CD8-positive, alpha-beta T cell (primary cell): ENCODE measurements at regions of chr6 and their contacts with region 1.

Region 1: GRCh38 chr6:11537229-11538051 is at the start of gene TMEM170B:
- DNase-seq: peak; percentile 94 to 99 (median 97)
- ATAC-seq: peak; percentile 93
- H3K4me3 ChIP-seq: peak within 1 kb of the TSS; percentile 71 to 85
- H3K4me3 Mint-ChIP-seq: peak within 1 kb of the TSS; percentile 85
- H3K27ac ChIP-seq: peak within 1 kb of the TSS; percentile 36 to 60
- H3K27ac Mint-ChIP-seq: peak within 1 kb of the TSS; percentile 74
- H3K4me1 ChIP-seq: peaks cover 10% of the 10 kb centered on the region
- H3K4me1 Mint-ChIP-seq: peaks cover 18% of the 10 kb centered on the region
- H3K27me3 ChIP-seq: no peaks in the 10 kb centered on the region
- H3K27me3 Mint-ChIP-seq: peaks cover 7% of the 10 kb centered on the region
- CTCF ChIP-seq: no peak
- total RNA-seq, gene TMEM170B: 2.2 TPM

Region 2: DNA sequence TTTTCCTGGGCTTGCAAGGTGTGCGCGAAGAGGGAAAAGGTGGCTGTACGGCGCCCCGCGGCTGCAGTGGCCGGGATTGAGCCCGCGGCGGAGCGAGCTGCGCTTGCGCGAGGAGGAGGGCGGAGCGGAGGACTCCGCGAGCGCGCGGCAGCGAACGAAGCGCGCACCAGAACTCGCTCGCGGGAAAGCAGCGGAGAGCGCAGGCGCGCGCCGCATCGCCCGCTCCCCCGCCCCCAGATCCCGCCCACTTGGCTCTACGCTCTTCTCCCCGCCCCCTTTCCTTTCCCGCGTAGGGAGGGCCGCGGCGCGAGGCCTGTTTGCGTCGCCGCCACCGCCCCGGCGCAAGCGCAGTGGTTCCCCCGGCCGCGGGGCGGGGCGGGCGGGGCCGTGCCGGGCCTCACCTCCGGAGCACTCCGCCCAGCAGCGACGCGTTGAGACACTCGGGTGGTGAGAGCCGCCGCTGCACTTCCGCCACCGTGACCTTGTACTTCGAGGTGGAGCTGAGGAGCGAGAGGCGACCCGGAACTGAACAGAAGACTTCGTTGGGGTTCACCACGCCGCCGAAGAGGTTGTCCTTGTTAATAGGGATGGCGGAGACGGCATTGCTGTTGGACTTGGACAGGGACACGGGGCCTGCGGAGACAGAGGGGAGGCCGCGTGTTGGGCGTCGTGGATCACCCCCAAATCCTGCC is 1133.2 kb before region 1 on chr6:
- CTCF ChIA-PET with region 1: no interaction called
- POLR2A ChIA-PET with region 1: no interaction called
- intact Hi-C with region 1: loop called (anchors 5 to 10 kb)
- DNase-seq: peak; percentile 50 to 91 (median 77)
- ATAC-seq: peak; percentile 87
- H3K4me3 ChIP-seq: peak overlapping the region; percentile 55 to 71
- H3K4me3 Mint-ChIP-seq: peak overlapping the region; percentile 73
- H3K27ac ChIP-seq: peak overlapping the region in 1 of 2 experiments; percentile 56
- H3K27ac Mint-ChIP-seq: peak overlapping the region; percentile 75
- H3K4me1 ChIP-seq: peaks cover 13% of the 10 kb centered on the region
- H3K4me1 Mint-ChIP-seq: peaks cover 15% of the 10 kb centered on the region
- H3K27me3 ChIP-seq: peaks cover 5 to 11% of the 10 kb centered on the region in 2 experiments
- H3K27me3 Mint-ChIP-seq: peaks cover 47% of the 10 kb centered on the region
- CTCF ChIP-seq: no peak

Region 3: GRCh38 chr6:10747251-10747972 is 790.0 kb before region 1 on chr6 and contains the start of gene TMEM14B:
- CTCF ChIA-PET with region 1: no interaction called
- POLR2A ChIA-PET with region 1: no interaction called
- intact Hi-C with region 1: loop called (anchors 1 to 5 kb)
- DNase-seq: peak; percentile 98 to 100 (median 99)
- ATAC-seq: peak; percentile 98
- H3K4me3 ChIP-seq: peak within 1 kb of the TSS; percentile 73 to 79
- H3K4me3 Mint-ChIP-seq: peak within 1 kb of the TSS; percentile 96
- H3K27ac ChIP-seq: peak within 1 kb of the TSS; percentile 77 to 79
- H3K27ac Mint-ChIP-seq: peak within 1 kb of the TSS; percentile 97
- H3K4me1 ChIP-seq: peaks cover 33% of the 10 kb centered on the region
- H3K4me1 Mint-ChIP-seq: peaks cover 57% of the 10 kb centered on the region
- H3K27me3 ChIP-seq: no peaks in the 10 kb centered on the region
- H3K27me3 Mint-ChIP-seq: no peaks in the 10 kb centered on the region
- CTCF ChIP-seq: no peak
- total RNA-seq, gene TMEM14B: 36.5 to 41.2 TPM

Region 4: GRCh38 chr6:10837995-10838793 is 699.2 kb before region 1 on chr6 and contains the start of gene MAK:
- CTCF ChIA-PET with region 1: no interaction called
- POLR2A ChIA-PET with region 1: no interaction called
- intact Hi-C with region 1: loop called (anchors 5 kb)
- DNase-seq: peak; percentile 74 to 94 (median 83)
- ATAC-seq: peak; percentile 96
- H3K4me3 ChIP-seq: peak within 1 kb of the TSS; percentile 53 to 56
- H3K4me3 Mint-ChIP-seq: peak within 1 kb of the TSS; percentile 73
- H3K27ac ChIP-seq: peak within 1 kb of the TSS in 1 of 2 experiments; percentile 30
- H3K27ac Mint-ChIP-seq: no peak within 1 kb of the TSS
- H3K4me1 ChIP-seq: peaks cover 22% of the 10 kb centered on the region
- H3K4me1 Mint-ChIP-seq: peaks cover 20% of the 10 kb centered on the region
- H3K27me3 ChIP-seq: peaks cover 11 to 25% of the 10 kb centered on the region in 2 experiments
- H3K27me3 Mint-ChIP-seq: peaks cover 55% of the 10 kb centered on the region
- CTCF ChIP-seq: no peak
- total RNA-seq, gene MAK: 0.62 to 0.89 TPM

Region 5: GRCh38 chr6:11353921-11354389 is 183.5 kb before region 1 on chr6:
- CTCF ChIA-PET with region 1: no interaction called
- POLR2A ChIA-PET with region 1: no interaction called
- intact Hi-C with region 1: no loop called
- DNase-seq: peak in 5 of 9 experiments; percentile 26 to 74 (median 48)
- ATAC-seq: peak; percentile 90
- H3K4me3 ChIP-seq: no peak overlapping the region
- H3K4me3 Mint-ChIP-seq: peak overlapping the region; percentile 40
- H3K27ac ChIP-seq: peak overlapping the region in 1 of 2 experiments; percentile 56
- H3K27ac Mint-ChIP-seq: peak overlapping the region; percentile 83
- H3K4me1 ChIP-seq: peaks cover 31% of the 10 kb centered on the region
- H3K4me1 Mint-ChIP-seq: peaks cover 83% of the 10 kb centered on the region
- H3K27me3 ChIP-seq: no peaks in the 10 kb centered on the region
- H3K27me3 Mint-ChIP-seq: no peaks in the 10 kb centered on the region
- CTCF ChIP-seq: no peak

Region 6: GRCh38 chr6:11381801-11382513 is 155.5 kb before region 1 on chr6:
- CTCF ChIA-PET with region 1: no interaction called
- POLR2A ChIA-PET with region 1: interaction called, 3 read pairs
- intact Hi-C with region 1: loop called (anchors 2 to 5 kb)
- DNase-seq: peak; percentile 45 to 92 (median 67)
- ATAC-seq: peak; percentile 92
- H3K4me3 ChIP-seq: peak overlapping the region; percentile 66 to 67
- H3K4me3 Mint-ChIP-seq: peak overlapping the region; percentile 91
- H3K27ac ChIP-seq: peak overlapping the region; percentile 79 to 87
- H3K27ac Mint-ChIP-seq: peak overlapping the region; percentile 90
- H3K4me1 ChIP-seq: peaks cover 30% of the 10 kb centered on the region
- H3K4me1 Mint-ChIP-seq: peaks cover 62% of the 10 kb centered on the region
- H3K27me3 ChIP-seq: no peaks in the 10 kb centered on the region
- H3K27me3 Mint-ChIP-seq: no peaks in the 10 kb centered on the region
- CTCF ChIP-seq: no peak

Region 7: DNA sequence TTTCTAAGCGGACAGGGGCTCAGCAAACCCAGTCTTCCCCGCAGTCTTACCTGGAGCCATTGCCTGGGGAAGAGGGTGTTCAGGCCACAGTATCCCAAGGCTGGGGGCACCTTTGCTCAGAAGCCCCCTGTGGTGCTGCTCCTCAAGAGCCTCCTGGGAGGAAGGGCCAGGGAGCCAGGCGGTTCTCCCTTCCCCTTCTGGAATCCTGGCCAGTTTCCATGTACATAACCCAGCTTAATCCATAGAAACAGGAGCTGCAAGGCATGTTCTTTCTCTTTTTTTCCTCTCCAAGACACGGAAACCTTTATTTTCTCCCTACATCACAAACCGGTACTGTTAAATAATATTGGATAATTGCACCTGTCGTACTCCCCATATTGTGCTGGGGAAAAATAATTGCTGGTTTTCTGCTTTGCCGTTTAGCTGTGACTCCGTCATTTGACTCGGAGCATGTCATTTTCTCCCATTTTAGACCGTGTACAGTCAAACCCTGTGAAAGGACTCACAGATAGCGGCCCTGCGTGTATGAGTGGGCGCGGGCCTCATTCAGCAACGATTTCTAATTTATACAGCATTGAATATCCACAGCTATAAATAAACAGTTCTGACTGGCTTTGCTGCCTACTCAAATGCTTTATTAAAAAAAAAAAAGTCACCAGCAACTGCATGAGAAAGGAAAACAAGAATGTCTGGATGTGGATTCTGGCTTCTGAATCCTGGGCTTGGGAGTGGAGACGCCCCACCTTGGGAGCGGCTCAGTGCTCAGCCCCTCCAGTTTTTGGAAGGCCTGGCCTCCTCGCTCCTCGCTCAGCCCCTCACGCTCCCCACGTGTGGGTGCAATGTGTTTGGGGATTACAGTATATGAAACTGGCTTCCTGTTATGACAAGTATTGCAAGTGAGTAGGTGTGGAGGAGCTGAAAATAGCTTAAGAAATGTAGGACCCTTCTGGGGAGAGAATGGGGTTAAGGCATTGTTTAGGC is 173.9 kb after region 1 on chr6:
- CTCF ChIA-PET with region 1: no interaction called
- POLR2A ChIA-PET with region 1: no interaction called
- intact Hi-C with region 1: loop called in 1 of 2 experiments (anchors 2 kb)
- DNase-seq: peak in 8 of 9 experiments; percentile 10 to 70 (median 30)
- ATAC-seq: peak; percentile 59
- H3K4me3 ChIP-seq: no peak overlapping the region
- H3K4me3 Mint-ChIP-seq: peak overlapping the region; percentile 33
- H3K27ac ChIP-seq: peak overlapping the region; percentile 28 to 46
- H3K27ac Mint-ChIP-seq: peak overlapping the region; percentile 96
- H3K4me1 ChIP-seq: peaks cover 72% of the 10 kb centered on the region
- H3K4me1 Mint-ChIP-seq: peaks cover 74% of the 10 kb centered on the region
- H3K27me3 ChIP-seq: no peaks in the 10 kb centered on the region
- H3K27me3 Mint-ChIP-seq: no peaks in the 10 kb centered on the region
- CTCF ChIP-seq: no peak

Region 8: DNA sequence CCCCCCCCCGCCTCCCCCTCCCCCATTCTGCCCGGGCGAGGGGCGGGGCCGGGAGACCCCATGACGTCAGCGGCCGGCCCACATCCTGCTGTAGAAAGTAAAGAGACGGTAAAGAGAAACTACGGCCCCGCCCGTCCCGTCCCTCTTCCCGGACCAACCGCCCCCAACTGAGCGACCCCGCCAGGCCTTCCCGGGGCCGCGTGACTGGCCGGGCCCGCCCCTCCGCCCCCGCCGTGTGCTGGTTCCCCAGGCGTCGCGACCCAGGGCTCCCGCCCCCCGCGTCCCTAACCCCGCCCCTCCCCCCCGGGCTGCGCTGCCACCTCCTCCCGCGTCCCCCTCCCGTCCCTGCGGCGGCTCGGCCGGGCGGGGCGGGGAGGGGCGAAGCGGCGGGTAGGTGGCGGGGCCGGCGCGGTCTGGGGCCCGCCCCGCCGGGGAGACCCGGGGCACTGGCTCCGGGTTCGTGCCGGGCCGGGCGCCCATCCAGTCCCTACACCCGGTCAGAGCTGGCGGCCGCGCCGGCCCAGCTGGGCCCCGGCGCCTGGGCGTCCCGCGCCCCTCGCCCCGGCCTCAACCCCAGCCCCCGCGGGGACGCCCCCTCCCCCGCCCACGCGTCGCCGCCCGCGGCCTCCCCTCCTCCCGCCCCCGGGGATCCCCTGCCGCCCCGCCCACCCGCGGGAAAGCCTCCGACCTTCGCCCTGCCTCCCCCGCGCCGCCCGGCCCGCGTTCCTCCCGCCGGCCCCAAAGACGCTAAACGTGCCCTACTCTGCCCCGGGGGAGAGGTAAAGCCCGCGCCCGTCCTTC is 474.0 kb after region 1 on chr6:
- CTCF ChIA-PET with region 1: no interaction called
- POLR2A ChIA-PET with region 1: no interaction called
- intact Hi-C with region 1: loop called (anchors 1 to 2 kb)
- DNase-seq: peak; percentile 92 to 99 (median 96)
- ATAC-seq: peak; percentile 71
- H3K4me3 ChIP-seq: peak overlapping the region in 1 of 2 experiments; percentile 73
- H3K4me3 Mint-ChIP-seq: peak overlapping the region; percentile 91
- H3K27ac ChIP-seq: peak overlapping the region in 1 of 2 experiments; percentile 93
- H3K27ac Mint-ChIP-seq: peak overlapping the region; percentile 94
- H3K4me1 ChIP-seq: peaks cover 28% of the 10 kb centered on the region
- H3K4me1 Mint-ChIP-seq: peaks cover 60% of the 10 kb centered on the region
- H3K27me3 ChIP-seq: no peaks in the 10 kb centered on the region
- H3K27me3 Mint-ChIP-seq: no peaks in the 10 kb centered on the region
- CTCF ChIP-seq: no peak